GM12878 (cell line): ENCODE measurements at regions of chr12 and their contacts with region 1.

Region 1: GRCh38 chr12:98274430-98275130 is 240.8 kb upstream of the TMPO start:
- DNase-seq: peak; percentile 71
- ATAC-seq: peak; percentile 90
- H3K4me3 ChIP-seq: peak overlapping the region; percentile 18; the same call in 1 of the 2 replicates
- H3K27ac ChIP-seq: peak overlapping the region; percentile 50; the same call in 1 of the 2 replicates
- H3K4me1 ChIP-seq: peaks cover 15% of the 10 kb centered on the region
- H3K27me3 ChIP-seq: no peaks in the 10 kb centered on the region
- CTCF ChIP-seq: no peak
- EP300 ChIP-seq: peak; percentile 74 to 96; a peak in 3 of 4 replicates
- POLR2A ChIP-seq: no peak
- RAD21 ChIP-seq: no peak

Region 2: GRCh38 chr12:98137278-98137677 is 137.3 kb before region 1 on chr12:
- CTCF ChIA-PET with region 1: no interaction called
- POLR2A ChIA-PET with region 1: no interaction called
- RAD21 ChIA-PET with region 1: no interaction called
- SMC1A ChIA-PET with region 1: no interaction called
- in situ Hi-C with region 1: no loop called
- intact Hi-C with region 1: no loop called
- DNase-seq: no peak
- ATAC-seq: peak; percentile 63; the same call in 2 of the 3 replicates
- H3K4me3 ChIP-seq: no peak overlapping the region
- H3K27ac ChIP-seq: no peak overlapping the region
- H3K4me1 ChIP-seq: no peaks in the 10 kb centered on the region
- H3K27me3 ChIP-seq: no peaks in the 10 kb centered on the region
- CTCF ChIP-seq: 0 out of 6 replicates have a peak, but pooled peaks of 1 of the 3 experiments have one; percentile 3
- EP300 ChIP-seq: no peak
- POLR2A ChIP-seq: no peak
- RAD21 ChIP-seq: no peak

Region 3: DNA sequence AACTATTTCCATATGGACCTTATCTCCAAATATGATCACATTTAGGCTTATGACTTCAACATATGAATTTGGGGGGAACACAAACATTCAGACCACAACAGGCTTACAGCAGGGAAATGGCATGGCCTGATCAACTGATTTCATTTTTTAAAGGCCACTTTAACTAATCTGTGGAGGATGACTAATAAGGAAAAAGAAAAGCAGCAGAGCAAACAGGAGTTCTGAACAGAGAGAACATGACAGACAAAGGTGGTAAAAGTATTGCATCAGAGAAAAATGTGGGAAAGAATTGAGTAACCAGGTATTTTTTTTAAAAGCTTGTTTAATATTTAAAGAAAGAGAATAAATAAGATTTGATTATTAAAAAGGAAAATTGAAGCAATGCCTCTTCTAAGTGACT is 125.3 kb before region 1 on chr12:
- CTCF ChIA-PET with region 1: no interaction called
- POLR2A ChIA-PET with region 1: no interaction called
- RAD21 ChIA-PET with region 1: interaction called, 4 read pairs
- SMC1A ChIA-PET with region 1: interaction called, 9 read pairs
- in situ Hi-C with region 1: no loop called
- intact Hi-C with region 1: loop called (anchors 1 kb)
- DNase-seq: peak; percentile 3
- ATAC-seq: peak; percentile 90
- H3K4me3 ChIP-seq: no peak overlapping the region
- H3K27ac ChIP-seq: no peak overlapping the region
- H3K4me1 ChIP-seq: no peaks in the 10 kb centered on the region
- H3K27me3 ChIP-seq: no peaks in the 10 kb centered on the region; a peak in 1 of 4 replicates
- CTCF ChIP-seq: no peak
- EP300 ChIP-seq: peak in 1 of 2 experiments; percentile 52; a peak in 1 of 4 replicates
- POLR2A ChIP-seq: no peak
- RAD21 ChIP-seq: no peak

Region 4: DNA sequence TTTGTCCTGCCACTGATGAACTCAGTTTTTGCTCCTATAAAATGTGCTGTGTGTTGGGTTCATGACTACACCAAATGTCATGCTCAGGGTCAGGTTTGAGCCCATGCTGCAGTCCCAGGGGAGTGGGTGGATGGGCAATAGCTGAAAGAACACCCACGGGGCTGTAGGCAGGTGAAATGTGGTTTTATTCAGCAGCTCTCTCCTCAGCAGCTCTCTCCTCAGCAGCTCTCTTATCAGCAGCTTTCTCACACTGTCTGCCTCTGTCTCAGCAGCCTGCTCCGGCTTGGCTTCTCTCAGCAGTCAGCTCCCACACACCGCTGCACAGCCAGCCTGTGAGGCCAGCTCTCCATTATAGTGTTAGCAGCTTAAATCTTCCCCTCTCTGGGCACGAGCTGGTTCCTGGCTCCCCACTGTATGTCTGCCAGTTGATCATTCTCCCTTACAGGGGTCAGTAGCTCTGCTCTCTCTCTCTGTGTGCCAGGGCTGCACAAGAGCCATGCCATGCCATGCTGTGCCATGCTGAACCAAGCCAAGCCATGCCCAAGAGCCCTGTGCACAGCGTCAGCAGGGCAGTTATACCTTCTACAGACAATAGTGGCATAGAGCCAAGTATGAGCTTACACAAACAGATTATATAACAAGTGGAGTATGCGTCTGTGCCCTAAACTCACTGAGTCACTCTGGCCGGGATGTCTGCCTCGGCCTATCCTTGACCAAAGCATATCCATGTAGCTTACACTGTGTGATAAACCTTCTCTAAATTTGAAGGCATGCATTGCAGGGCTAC is 62.5 kb before region 1 on chr12:
- CTCF ChIA-PET with region 1: no interaction called
- POLR2A ChIA-PET with region 1: no interaction called
- RAD21 ChIA-PET with region 1: interaction called, 10 read pairs
- SMC1A ChIA-PET with region 1: interaction called, 4 read pairs
- in situ Hi-C with region 1: no loop called
- intact Hi-C with region 1: no loop called
- DNase-seq: no peak
- ATAC-seq: peak; percentile 84
- H3K4me3 ChIP-seq: no peak overlapping the region
- H3K27ac ChIP-seq: no peak overlapping the region
- H3K4me1 ChIP-seq: no peaks in the 10 kb centered on the region
- H3K27me3 ChIP-seq: no peaks in the 10 kb centered on the region; a peak in 1 of 4 replicates
- CTCF ChIP-seq: no peak
- EP300 ChIP-seq: peak; percentile 9 to 18; a peak in 1 of 4 replicates
- POLR2A ChIP-seq: no peak
- RAD21 ChIP-seq: no peak

Region 5: DNA sequence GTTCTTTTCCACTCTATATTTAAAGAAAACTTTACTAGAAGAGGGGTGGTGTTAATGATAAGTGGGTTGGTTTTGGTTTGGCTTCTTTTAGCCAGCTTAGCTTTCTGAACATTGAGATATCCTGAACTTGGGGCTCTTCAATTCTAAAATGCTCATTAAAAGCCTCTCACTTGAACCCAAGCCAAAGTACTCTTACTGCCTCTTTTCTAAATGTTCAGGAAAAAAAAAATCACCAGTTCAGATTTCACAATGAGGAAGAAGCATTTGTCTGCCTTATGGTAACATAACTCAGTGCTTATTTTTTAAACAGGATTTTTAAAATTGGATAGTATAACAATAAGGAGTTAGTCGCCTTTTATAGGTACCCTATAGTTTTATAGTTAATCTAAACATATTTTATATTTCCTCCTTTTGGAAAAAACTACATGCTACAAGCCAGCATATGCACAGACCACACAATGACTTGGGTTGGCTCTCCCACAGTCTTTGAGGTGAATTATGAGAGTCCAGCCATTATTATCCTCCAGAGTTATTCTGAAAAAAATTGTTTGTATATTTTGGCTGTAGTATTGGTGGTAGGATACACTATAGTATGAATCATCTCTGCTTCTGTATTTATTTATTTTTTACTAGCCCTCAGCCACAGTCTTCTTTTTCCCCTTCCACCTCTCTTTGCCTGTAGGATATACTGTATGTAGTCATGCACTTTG is 45.3 kb after region 1 on chr12:
- CTCF ChIA-PET with region 1: interaction called, 4 read pairs
- POLR2A ChIA-PET with region 1: no interaction called
- RAD21 ChIA-PET with region 1: interaction called, 6 read pairs
- SMC1A ChIA-PET with region 1: interaction called, 9 read pairs
- in situ Hi-C with region 1: no loop called
- intact Hi-C with region 1: loop called (anchors 1 kb)
- DNase-seq: no peak
- ATAC-seq: peak; percentile 4; the same call in 2 of the 3 replicates
- H3K4me3 ChIP-seq: no peak overlapping the region
- H3K27ac ChIP-seq: no peak overlapping the region
- H3K4me1 ChIP-seq: peaks cover 2% of the 10 kb centered on the region; the same call in 1 of the 2 replicates
- H3K27me3 ChIP-seq: no peaks in the 10 kb centered on the region
- CTCF ChIP-seq: no peak
- EP300 ChIP-seq: no peak
- POLR2A ChIP-seq: no peak
- RAD21 ChIP-seq: no peak